Naive thymus-derived CD4-positive, alpha-beta T cell (primary cell): ENCODE measurements at regions of chr9 and their contacts with region 1.

Region 1: GRCh38 chr9:29432191-29432590 is 1858.9 kb upstream of the C9orf72 start:
- DNase-seq: no peak
- ATAC-seq: no peak
- H3K4me3 ChIP-seq: no peak overlapping the region
- H3K4me3 Mint-ChIP-seq: no peak overlapping the region
- H3K27ac ChIP-seq: no peak overlapping the region
- H3K27ac Mint-ChIP-seq: no peak overlapping the region
- H3K4me1 ChIP-seq: no peaks in the 10 kb centered on the region
- H3K4me1 Mint-ChIP-seq: no peaks in the 10 kb centered on the region
- H3K27me3 ChIP-seq: no peaks in the 10 kb centered on the region
- H3K27me3 Mint-ChIP-seq: no peaks in the 10 kb centered on the region

Region 2: GRCh38 chr9:29393064-29393463 is 39.1 kb before region 1 on chr9:
- CTCF ChIA-PET with region 1: no interaction called
- POLR2A ChIA-PET with region 1: no interaction called
- intact Hi-C with region 1: no loop called
- DNase-seq: no peak
- ATAC-seq: no peak
- H3K4me3 ChIP-seq: no peak overlapping the region
- H3K4me3 Mint-ChIP-seq: no peak overlapping the region
- H3K27ac ChIP-seq: no peak overlapping the region
- H3K27ac Mint-ChIP-seq: no peak overlapping the region
- H3K4me1 ChIP-seq: no peaks in the 10 kb centered on the region
- H3K4me1 Mint-ChIP-seq: no peaks in the 10 kb centered on the region
- H3K27me3 ChIP-seq: no peaks in the 10 kb centered on the region
- H3K27me3 Mint-ChIP-seq: no peaks in the 10 kb centered on the region

Region 3: DNA sequence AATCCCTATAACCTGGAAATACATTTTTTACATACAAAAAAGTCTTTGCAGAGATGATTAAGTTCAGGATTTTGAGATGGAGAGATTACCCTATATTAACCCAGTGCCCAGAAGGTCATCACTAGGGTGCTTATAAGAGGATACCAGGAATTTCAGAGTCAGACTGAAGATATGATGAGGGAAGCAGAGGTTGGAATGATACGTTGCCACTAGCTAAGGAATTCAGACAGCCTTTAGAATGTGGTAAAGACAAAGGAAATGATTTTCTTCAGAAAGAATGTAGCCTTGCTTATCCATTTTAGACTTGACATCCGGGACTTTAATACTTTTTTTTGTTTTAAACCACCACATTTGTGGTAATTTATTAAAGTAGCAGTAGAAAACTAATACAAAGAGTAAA is 317.9 kb after region 1 on chr9:
- CTCF ChIA-PET with region 1: no interaction called
- POLR2A ChIA-PET with region 1: no interaction called
- intact Hi-C with region 1: loop called in 1 of 2 experiments (anchors 5 kb)
- DNase-seq: no peak
- ATAC-seq: no peak
- H3K4me3 ChIP-seq: no peak overlapping the region
- H3K4me3 Mint-ChIP-seq: no peak overlapping the region
- H3K27ac ChIP-seq: no peak overlapping the region
- H3K27ac Mint-ChIP-seq: no peak overlapping the region
- H3K4me1 ChIP-seq: no peaks in the 10 kb centered on the region
- H3K4me1 Mint-ChIP-seq: peaks cover 0 to 1% (median 0%) of the 10 kb centered on the region in 7 donors
- H3K27me3 ChIP-seq: no peaks in the 10 kb centered on the region
- H3K27me3 Mint-ChIP-seq: no peaks in the 10 kb centered on the region